ENCODE measurements at regions of chr17 and their contacts with region 1.

Region 1: DNA sequence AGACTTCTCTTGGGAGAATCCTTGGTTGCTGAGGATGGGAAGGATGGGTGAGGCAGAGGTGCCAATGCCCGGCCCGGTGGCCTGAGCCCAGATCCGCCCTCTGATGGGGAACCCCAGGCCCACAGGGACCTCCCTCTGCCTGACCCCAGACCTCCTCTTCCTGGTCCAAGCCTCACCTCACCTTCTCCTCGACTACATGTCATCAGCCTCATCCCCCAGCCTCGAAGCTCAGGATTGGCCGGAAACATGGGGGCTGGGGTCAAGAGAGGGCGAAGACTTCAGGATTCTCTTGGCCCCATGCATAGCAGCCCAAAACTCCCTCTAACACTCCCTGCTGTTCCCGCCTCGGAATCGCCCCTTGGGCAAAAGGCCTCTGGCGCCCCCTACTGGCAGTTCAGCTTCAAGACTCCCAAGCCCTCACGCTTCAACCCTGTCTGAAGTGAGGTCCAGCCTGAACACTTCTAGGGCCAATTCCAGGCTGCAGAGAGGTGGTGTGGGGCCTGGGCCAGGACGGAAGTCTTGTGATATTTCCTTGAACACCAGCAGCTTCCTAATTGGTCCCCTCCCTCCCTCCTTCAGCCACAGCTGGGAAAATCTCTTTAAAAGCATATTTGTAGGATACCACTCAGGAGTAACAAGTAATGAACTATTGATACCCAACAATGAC is 47.2 kb downstream of the ARHGAP27 start:
- DNase-seq: peak; percentile 75 to 92
- H3K4me3 ChIP-seq: no peak overlapping the region
- H3K27ac ChIP-seq: no peak overlapping the region
- H3K4me1 ChIP-seq: peaks cover 0 to 14% of the 10 kb centered on the region in 2 donors
- H3K27me3 ChIP-seq: no peaks in the 10 kb centered on the region
- CTCF ChIP-seq: peak; percentile 90 to 99 (median 98)
- POLR2A ChIP-seq: no peak

Region 2: DNA sequence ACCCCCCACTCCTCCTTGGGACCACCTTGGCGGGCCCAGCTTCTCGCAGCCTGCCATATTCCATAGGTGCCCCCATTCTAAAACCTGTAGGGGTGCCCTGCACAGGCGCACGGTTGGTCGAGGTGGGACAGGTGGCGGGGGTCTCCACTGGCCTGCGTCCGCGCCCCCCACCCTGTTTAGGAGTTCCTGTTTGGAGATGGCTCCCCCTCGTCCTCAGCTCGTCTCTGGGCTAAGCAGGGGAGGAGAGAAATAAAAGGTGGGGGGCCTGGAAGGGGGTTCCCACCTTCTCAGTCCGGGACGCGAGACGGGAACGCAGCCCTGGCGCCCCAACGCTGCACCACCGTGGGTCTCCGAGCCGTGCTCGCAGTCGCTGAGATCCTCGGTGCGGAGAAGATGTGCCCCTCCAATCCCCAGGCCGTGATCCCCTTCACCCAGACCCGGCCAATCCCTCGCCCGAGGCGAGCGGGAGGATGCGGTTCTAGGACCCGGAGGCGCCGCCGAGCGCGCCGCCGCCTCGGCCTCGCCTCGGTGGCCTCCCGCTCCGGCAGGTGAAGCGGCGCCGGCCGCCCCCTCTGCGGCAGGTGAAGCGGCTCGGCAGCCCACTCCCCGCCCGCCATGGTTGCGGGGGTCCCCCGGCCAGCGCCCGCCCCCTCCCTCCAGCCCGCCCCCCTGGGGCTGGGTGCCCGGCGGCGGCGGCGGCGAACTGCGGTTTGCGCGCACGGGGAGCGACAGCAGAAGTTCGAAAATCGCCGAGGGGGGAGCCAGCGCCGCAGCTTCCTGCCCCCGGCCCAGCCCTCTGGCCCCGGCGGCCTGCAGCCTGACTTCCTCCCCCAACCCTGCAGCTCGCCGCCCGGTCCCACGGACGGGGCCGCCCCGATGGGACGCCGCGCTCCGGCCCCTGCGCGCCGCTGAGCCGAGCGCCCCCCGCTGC is 164.1 kb before region 1 on chr17 and contains the start of gene FMNL1:
- intact Hi-C with region 1: loop called (anchors 5 kb)
- DNase-seq: no peak
- H3K4me3 ChIP-seq: peak within 1 kb of the TSS; percentile 70 to 94 (median 71)
- H3K27ac ChIP-seq: peak within 1 kb of the TSS; percentile 42 to 94
- H3K4me1 ChIP-seq: peaks cover 0 to 6% of the 10 kb centered on the region in 2 donors
- H3K27me3 ChIP-seq: no peaks in the 10 kb centered on the region
- CTCF ChIP-seq: no peak
- POLR2A ChIP-seq: no peak
- total RNA-seq, gene FMNL1: 9.2 to 31.2 (median 10.8) TPM